CD14-positive monocyte (primary cell): ENCODE measurements at regions of chr1 and their contacts with region 1.

Region 1: GRCh38 chr1:206589206-206589605 is 23.1 kb downstream of the EIF2D start:
- DNase-seq: no peak
- H3K4me3 ChIP-seq: no peak overlapping the region
- H3K4me3 Mint-ChIP-seq: no peak overlapping the region
- H3K27ac ChIP-seq: no peak overlapping the region
- H3K27ac Mint-ChIP-seq: peak overlapping the region in 3 of 7 donors; percentile 26 to 36 (median 31)
- H3K4me1 ChIP-seq: no peaks in the 10 kb centered on the region
- H3K4me1 Mint-ChIP-seq: peaks cover 3% of the 10 kb centered on the region
- H3K27me3 ChIP-seq: no peaks in the 10 kb centered on the region
- H3K27me3 Mint-ChIP-seq: no peaks in the 10 kb centered on the region
- CTCF ChIP-seq: no peak

Region 2: DNA sequence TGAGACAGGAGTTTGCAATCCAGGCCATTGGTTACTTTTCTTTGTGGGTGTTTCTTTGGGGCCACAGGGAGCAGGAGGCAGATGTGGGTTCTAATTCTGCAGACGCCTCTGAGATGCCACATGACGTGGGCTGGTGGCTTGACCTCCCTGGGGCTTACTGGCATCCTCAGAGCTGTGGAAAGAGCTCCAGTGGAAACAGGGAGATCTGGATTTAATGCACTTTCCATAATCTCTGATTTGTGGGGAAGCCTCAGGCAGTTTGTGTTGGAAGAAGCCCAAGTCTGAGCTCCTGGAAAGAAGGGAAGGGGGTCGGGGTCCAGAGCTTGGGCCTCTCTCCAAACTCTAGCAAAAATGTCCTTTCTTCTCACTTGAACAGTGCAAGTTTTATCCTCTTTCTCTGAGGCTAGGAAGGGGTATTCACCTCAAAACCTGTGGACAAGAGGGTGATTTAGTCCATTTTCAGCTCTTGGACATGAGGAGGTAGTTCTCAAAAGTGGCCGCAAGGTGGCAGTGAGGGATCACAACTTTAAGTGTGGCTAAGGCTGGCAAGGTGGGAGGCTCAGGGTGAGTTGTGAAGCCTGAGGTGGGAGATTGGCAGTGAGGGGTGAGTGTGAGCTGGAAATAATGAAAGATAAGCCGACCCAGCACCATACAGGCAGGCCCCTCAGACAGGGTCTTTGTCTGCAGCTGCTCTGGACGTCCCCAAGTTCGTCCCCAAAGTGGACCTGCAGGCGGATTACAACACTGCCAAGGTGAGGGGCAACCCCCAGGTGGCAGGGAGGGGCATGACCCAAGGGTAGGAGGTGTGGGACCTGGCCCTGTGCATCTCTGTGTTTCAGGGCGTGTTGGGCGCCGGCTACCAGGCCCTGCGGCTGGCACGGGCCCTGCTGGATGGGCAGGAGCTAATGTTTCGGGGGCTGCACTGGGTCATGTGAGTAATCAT is 109.8 kb before region 1 on chr1:
- intact Hi-C with region 1: loop called in 1 of 2 experiments (anchors 5 kb)
- DNase-seq: peak; percentile 53 to 69 (median 61)
- H3K4me3 ChIP-seq: no peak overlapping the region
- H3K4me3 Mint-ChIP-seq: no peak overlapping the region
- H3K27ac ChIP-seq: no peak overlapping the region
- H3K27ac Mint-ChIP-seq: peak overlapping the region in 4 of 7 donors; percentile 2 to 84 (median 52)
- H3K4me1 ChIP-seq: no peaks in the 10 kb centered on the region
- H3K4me1 Mint-ChIP-seq: peaks cover 3% of the 10 kb centered on the region
- H3K27me3 ChIP-seq: no peaks in the 10 kb centered on the region
- H3K27me3 Mint-ChIP-seq: peaks cover 0 to 2% (median 0%) of the 10 kb centered on the region in 3 donors
- CTCF ChIP-seq: peak; percentile 74

Region 3: GRCh38 chr1:206753141-206753540 is 163.9 kb after region 1 on chr1:
- intact Hi-C with region 1: no loop called
- DNase-seq: peak; percentile 63 to 87 (median 78)
- H3K4me3 ChIP-seq: no peak overlapping the region
- H3K4me3 Mint-ChIP-seq: no peak overlapping the region
- H3K27ac ChIP-seq: peak overlapping the region in 1 of 2 donors; percentile 12
- H3K27ac Mint-ChIP-seq: peak overlapping the region in 5 of 7 donors; percentile 25 to 77 (median 59)
- H3K4me1 ChIP-seq: peaks cover 22 to 40% of the 10 kb centered on the region in 2 donors
- H3K4me1 Mint-ChIP-seq: peaks cover 33% of the 10 kb centered on the region
- H3K27me3 ChIP-seq: no peaks in the 10 kb centered on the region
- H3K27me3 Mint-ChIP-seq: peaks cover 0 to 2% (median 0%) of the 10 kb centered on the region in 3 donors
- CTCF ChIP-seq: no peak